ENCODE measurements at regions of chr17 and their contacts with region 1.

Region 1: DNA sequence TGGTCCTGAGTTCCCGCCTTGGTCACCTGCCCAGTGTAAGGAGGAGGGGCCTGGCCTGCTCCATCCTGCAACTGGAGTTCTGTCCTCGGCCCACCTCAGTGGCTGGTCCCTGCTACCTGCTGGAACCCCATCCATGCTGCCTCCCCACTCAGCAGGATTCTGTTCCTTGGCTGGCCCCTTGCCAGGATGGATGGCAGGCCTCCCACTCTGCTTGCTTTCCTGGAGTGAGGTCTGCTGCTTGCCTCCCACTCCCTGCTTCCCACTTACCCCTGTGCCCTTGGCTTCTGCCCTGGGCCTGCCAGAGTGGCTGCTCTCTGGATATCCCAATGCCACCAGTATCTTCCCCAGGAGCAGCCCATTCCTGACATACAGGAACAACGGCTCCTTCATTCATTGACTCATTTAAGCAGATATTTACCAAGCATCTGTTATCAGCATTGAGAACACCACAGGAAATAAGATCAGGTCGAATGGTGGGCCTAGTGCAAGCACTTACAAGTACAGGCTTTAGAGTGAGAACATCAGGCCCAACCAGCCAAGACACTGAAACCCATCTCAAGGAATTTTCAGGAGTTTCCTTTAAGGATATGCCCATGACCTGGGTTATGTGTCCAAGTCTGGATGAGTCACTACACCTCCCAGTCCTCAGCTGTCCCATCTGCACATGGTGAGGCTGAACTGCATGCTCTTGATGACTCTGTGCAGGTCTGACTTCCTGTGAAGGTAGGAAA is 17.0 kb upstream of the RPRML start:
- DNase-seq: no peak
- H3K4me3 ChIP-seq: no peak overlapping the region
- H3K27ac ChIP-seq: no peak overlapping the region
- H3K4me1 ChIP-seq: no peaks in the 10 kb centered on the region
- H3K27me3 ChIP-seq: no peaks in the 10 kb centered on the region
- CTCF ChIP-seq: no peak

Region 2: GRCh38 chr17:46811978-46812583 is 183.9 kb before region 1 on chr17:
- intact Hi-C with region 1: no loop called
- DNase-seq: no peak
- H3K4me3 ChIP-seq: no peak overlapping the region
- H3K27ac ChIP-seq: no peak overlapping the region
- H3K4me1 ChIP-seq: no peaks in the 10 kb centered on the region
- H3K27me3 ChIP-seq: peaks cover 69% of the 10 kb centered on the region
- CTCF ChIP-seq: no peak

Region 3: GRCh38 chr17:46894476-46895151 is 101.4 kb before region 1 on chr17:
- intact Hi-C with region 1: no loop called
- DNase-seq: no peak
- H3K4me3 ChIP-seq: no peak overlapping the region
- H3K27ac ChIP-seq: peak overlapping the region; percentile 30
- H3K4me1 ChIP-seq: peaks cover 12% of the 10 kb centered on the region
- H3K27me3 ChIP-seq: peaks cover 75% of the 10 kb centered on the region
- CTCF ChIP-seq: no peak

Region 4: DNA sequence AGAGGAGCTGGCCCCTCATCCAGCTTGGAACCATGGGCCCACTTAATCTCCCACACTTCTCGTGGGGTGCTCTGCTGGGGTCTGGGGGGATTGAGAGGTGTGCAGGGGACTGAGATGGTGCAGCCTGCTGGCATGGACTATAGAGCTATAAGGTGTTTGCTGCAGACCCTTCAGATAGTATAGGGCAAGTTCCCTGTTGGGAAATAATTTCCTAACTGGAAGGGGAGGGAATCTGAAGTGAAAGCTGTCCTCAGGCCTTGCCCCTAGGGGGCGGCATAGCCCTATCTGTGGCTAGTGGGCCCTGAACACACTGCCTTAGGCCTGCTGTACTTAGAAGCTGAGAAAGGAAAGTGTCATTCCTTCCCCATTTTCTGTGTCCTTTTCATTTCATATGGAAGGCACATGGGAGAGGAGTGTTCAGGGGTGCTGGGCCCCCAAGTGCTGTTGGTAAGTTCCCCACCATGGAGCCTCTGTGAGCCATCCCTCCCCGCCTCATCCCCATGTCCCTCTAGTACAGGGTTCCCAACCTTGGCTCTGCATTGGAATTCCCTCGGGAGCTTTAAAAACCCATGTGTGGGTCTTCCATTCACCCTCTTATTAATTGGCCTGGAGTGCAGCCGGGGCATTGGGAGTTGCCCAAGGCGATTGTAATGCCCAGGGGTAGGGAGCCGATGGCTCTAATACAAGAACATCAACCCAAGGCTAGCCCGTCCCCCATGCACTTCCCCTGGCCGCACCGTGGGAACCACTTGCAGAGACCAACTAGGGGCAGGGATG is 53.4 kb before region 1 on chr17:
- intact Hi-C with region 1: loop called (anchors 2 kb)
- DNase-seq: peak; percentile 62
- H3K4me3 ChIP-seq: no peak overlapping the region
- H3K27ac ChIP-seq: no peak overlapping the region
- H3K4me1 ChIP-seq: peaks cover 29% of the 10 kb centered on the region
- H3K27me3 ChIP-seq: no peaks in the 10 kb centered on the region
- CTCF ChIP-seq: peak; percentile 88

Region 5: GRCh38 chr17:47131761-47132160 is 135.8 kb after region 1 on chr17:
- intact Hi-C with region 1: no loop called
- DNase-seq: no peak
- H3K4me3 ChIP-seq: no peak overlapping the region
- H3K27ac ChIP-seq: no peak overlapping the region
- H3K4me1 ChIP-seq: no peaks in the 10 kb centered on the region
- H3K27me3 ChIP-seq: no peaks in the 10 kb centered on the region
- CTCF ChIP-seq: no peak

Region 6: DNA sequence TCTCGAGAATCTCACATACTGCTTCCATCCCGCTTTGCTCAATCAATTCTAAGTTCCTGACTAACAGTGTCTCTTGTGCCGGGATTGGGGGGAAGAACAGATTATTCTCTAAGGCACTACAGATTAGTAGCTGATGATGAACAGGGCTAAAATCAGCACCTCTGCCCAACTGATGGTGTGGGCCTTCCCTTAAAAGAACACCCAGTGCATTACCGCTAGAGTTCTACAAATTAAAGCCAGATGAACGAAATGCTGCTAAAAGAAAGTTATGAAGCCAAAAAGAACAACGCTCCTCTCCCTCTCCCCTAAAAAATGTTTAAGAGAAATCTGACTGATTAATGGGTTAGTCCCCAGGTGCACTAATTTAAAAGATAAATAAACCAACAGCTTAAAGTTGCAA is 188.7 kb after region 1 on chr17:
- intact Hi-C with region 1: no loop called
- DNase-seq: no peak
- H3K4me3 ChIP-seq: peak overlapping the region; percentile 2
- H3K27ac ChIP-seq: peak overlapping the region; percentile 14
- H3K4me1 ChIP-seq: peaks cover 94% of the 10 kb centered on the region
- H3K27me3 ChIP-seq: no peaks in the 10 kb centered on the region
- CTCF ChIP-seq: no peak